HepG2 (cell line): ENCODE measurements at regions of chr19 and their contacts with region 1.

Region 1: GRCh38 chr19:47436712-47437401 is 17.5 kb upstream of the MEIS3 start:
- DNase-seq: peak; percentile 50
- ATAC-seq: peak; percentile 92
- H3K4me3 ChIP-seq: no peak overlapping the region
- H3K27ac ChIP-seq: no peak overlapping the region
- H3K4me1 ChIP-seq: no peaks in the 10 kb centered on the region
- H3K27me3 ChIP-seq: peaks cover 0 to 8% of the 10 kb centered on the region in 2 experiments; a peak in 2 of 5 replicates
- CTCF ChIP-seq: peak; percentile 96
- EP300 ChIP-seq: no peak
- POLR2A ChIP-seq: no peak
- RAD21 ChIP-seq: peak; percentile 83

Region 2: DNA sequence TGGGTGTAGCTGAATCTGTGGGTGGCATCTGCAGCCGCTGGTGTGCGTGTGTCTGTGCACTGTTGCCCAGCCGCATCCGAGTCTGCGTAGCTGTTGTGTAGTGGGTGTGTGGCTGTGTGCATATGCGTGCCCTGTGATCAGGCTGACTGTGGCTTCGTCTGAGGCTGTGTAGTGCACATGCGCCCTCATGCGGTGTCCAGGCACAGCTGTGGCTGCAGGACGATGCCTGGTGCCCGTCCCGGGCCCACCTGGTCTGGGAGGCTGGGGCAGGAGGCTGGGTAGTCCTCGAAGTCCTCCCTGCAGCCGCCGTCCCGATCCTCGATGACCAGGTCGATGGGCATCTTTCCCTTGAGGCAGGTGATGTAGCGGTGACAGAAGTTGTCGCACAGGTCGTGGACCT is 22.4 kb before region 1 on chr19:
- CTCF ChIA-PET with region 1: no interaction called
- POLR2A ChIA-PET with region 1: no interaction called
- in situ Hi-C with region 1: no loop called
- intact Hi-C with region 1: no loop called
- DNase-seq: peak; percentile 57
- ATAC-seq: peak; percentile 88
- H3K4me3 ChIP-seq: no peak overlapping the region
- H3K27ac ChIP-seq: no peak overlapping the region
- H3K4me1 ChIP-seq: peaks cover 5% of the 10 kb centered on the region; the same call in 1 of the 2 replicates
- H3K27me3 ChIP-seq: peaks cover 0 to 62% of the 10 kb centered on the region in 2 experiments; a peak in 4 of 5 replicates
- CTCF ChIP-seq: peak; percentile 85
- EP300 ChIP-seq: no peak
- POLR2A ChIP-seq: no peak
- RAD21 ChIP-seq: peak; percentile 72

Region 3: GRCh38 chr19:47483800-47484690 is 47.2 kb after region 1 on chr19 and contains the start of gene KPTN:
- CTCF ChIA-PET with region 1: interaction called, 11 read pairs
- POLR2A ChIA-PET with region 1: interaction called, 3 read pairs
- in situ Hi-C with region 1: no loop called
- intact Hi-C with region 1: no loop called
- DNase-seq: peak; percentile 77
- ATAC-seq: peak; percentile 86
- H3K4me3 ChIP-seq: peak within 1 kb of the TSS; percentile 86 to 98 (median 87)
- H3K27ac ChIP-seq: peak within 1 kb of the TSS; percentile 87
- H3K4me1 ChIP-seq: peaks cover 12% of the 10 kb centered on the region
- H3K27me3 ChIP-seq: no peaks in the 10 kb centered on the region
- CTCF ChIP-seq: peak; percentile 98
- EP300 ChIP-seq: peak in 1 of 2 experiments; percentile 54; a peak in 1 of 4 replicates
- POLR2A ChIP-seq: peak; percentile 70 to 82
- RAD21 ChIP-seq: peak; percentile 68
- total RNA-seq, gene KPTN: 8.4 and 9.1 TPM in 2 replicates

Region 4: DNA sequence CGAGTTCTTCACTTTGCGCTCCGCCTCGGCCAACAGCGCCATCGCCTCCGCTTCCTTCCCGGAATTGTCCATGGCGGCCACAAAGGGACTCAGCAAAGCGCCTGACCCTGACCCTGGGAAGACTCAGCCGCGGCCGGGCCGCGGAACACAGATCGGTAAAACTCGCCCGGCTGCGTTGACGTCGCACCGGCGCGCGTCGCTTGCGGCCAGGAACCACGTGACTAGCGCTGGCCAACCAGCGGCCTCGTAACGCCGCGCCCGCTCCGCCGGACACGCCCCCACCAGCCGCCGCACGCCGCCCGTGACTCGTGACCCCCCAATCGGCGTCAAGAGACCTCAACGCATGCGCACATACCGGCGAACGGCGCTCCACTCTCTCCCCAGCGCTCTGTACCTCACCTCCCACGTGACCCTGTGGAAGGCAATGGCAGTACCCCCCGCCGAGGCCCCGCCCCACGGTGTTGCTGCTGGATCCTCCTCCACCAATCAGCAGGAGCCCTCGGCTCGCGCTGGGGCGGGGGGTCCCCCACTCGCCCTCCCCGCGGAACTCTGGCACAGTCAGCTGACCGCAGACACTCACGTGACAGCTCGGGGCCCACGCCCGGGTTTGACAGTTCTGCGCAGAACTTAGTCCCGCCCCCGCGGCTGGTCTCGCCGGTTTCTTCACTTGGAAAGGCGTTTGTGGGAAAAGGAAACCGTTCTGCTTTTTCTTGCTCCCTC is 78.2 kb after region 1 on chr19 and contains the start of gene NAPA:
- CTCF ChIA-PET with region 1: interaction called, 14 read pairs
- POLR2A ChIA-PET with region 1: interaction called, 3 read pairs
- in situ Hi-C with region 1: loop called (anchors 5 kb)
- intact Hi-C with region 1: loop called (anchors 1 kb)
- DNase-seq: peak; percentile 99
- ATAC-seq: peak; percentile 87
- H3K4me3 ChIP-seq: peak within 1 kb of the TSS; percentile 93 to 99 (median 98)
- H3K27ac ChIP-seq: peak within 1 kb of the TSS; percentile 87
- H3K4me1 ChIP-seq: peaks cover 40% of the 10 kb centered on the region
- H3K27me3 ChIP-seq: no peaks in the 10 kb centered on the region; a peak in 1 of 5 replicates
- CTCF ChIP-seq: no peak
- EP300 ChIP-seq: peak in 1 of 2 experiments; percentile 43; a peak in 2 of 4 replicates
- POLR2A ChIP-seq: peak; percentile 57 to 89
- RAD21 ChIP-seq: peak; percentile 69
- total RNA-seq, gene NAPA: 32.6 and 36.5 TPM in 2 replicates

Region 5: GRCh38 chr19:47707135-47707925 is 270.5 kb after region 1 on chr19:
- CTCF ChIA-PET with region 1: interaction called, 18 read pairs
- POLR2A ChIA-PET with region 1: no interaction called
- in situ Hi-C with region 1: no loop called
- intact Hi-C with region 1: no loop called
- DNase-seq: peak; percentile 71
- ATAC-seq: peak; percentile 94
- H3K4me3 ChIP-seq: no peak overlapping the region
- H3K27ac ChIP-seq: no peak overlapping the region
- H3K4me1 ChIP-seq: peaks cover 10% of the 10 kb centered on the region
- H3K27me3 ChIP-seq: no peaks in the 10 kb centered on the region; a peak in 1 of 5 replicates
- CTCF ChIP-seq: peak; percentile 88
- EP300 ChIP-seq: no peak
- POLR2A ChIP-seq: no peak
- RAD21 ChIP-seq: peak; percentile 72